ENCODE measurements at regions of chr2 and their contacts with region 1.

Region 1: DNA sequence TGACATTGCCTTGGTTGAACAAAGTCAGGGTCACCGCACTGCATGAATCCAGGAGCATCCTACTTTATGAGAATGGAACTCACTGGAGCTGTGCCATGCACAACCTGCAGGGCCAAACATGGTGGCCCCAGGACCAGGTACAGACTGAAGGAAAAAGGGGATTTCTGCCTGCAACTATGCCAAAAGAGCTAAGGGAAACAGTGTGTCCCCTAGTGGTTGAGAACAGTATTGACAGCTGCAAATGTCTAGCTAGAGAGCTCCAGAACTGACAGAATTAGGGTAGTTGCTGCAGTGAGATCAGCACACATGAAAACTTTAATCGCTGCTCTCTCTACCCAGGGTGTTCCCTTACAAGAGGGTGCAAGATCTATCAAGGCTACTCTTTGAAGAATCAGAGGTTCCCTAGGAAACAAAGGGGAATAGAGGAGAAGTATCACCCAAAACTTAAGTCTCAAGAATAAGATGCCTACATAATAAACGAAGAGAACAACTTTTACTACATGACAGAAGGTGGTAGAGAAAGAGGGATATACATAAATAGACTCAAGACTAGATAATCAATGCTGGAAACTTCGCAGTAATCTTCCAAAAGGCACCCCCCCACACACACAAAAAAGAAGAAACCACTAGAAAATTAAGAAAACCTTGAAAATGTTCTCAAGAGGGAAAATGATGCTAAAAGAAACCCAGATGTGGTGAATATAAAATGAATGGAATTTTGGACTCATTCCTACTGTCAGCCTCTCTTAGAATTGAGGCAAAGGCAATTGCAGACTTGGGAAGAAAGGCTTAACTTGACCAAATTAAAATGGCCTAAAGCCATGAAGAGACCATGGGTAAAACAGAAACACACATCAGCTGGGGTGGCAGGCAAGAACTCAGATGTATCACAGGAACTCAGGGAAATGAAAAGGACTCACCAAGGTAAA is 43.6 kb upstream of the IHH start:
- H3K4me3 ChIP-seq: no peak overlapping the region
- H3K27ac ChIP-seq: no peak overlapping the region
- H3K4me1 ChIP-seq: no peaks in the 10 kb centered on the region
- CTCF ChIP-seq: peak; percentile 31

Region 2: GRCh38 chr2:219041252-219041651 is 63.1 kb before region 1 on chr2 and contains the start of gene CFAP65:
- CTCF ChIA-PET with region 1: interaction called, 14 read pairs
- POLR2A ChIA-PET with region 1: no interaction called
- H3K4me3 ChIP-seq: peak within 1 kb of the TSS; percentile 50
- H3K27ac ChIP-seq: no peak within 1 kb of the TSS
- H3K4me1 ChIP-seq: no peaks in the 10 kb centered on the region
- CTCF ChIP-seq: no peak

Region 3: DNA sequence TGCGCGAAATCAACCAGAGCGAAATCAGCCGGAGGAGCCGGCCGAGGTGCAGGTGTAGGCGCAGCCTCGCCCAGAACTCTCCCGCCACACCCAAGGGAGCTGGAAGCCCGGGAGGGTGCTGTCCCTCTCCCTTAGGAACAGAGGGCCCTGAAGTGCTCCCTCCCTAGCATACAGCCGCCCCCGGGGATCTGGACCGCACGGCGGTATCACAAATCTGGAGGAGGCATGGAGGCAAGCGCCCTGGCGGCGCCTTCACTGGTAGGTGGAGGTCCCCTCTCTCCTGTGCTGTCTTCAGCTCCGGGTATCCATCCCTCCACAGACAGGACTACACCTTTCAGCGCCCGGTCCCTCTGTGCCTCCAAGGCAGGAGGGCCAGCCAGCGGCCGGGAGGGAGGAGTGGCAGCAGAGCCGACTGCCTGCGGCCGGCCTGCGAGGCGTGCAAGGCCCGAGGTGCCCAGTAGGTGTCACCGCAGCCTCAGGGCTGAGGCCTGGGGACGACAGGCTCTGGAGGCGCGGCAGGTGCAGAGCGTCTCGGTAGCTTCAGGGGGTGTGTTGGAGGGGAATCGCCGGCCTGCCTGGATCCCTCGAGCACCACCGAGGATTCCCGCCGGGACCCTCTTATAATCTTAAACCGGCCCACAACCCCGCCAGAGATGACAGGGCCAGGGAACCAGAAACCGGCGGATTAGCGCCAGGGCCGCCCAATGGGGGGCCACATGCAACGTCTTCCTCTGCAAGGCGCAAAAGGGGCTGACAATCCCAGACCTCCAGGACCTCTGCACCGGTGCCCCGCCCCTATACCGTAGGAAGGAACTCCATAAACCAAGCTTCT is 46.4 kb before region 1 on chr2:
- CTCF ChIA-PET with region 1: interaction called, 19 read pairs
- POLR2A ChIA-PET with region 1: interaction called, 3 read pairs
- H3K4me3 ChIP-seq: no peak overlapping the region
- H3K27ac ChIP-seq: no peak overlapping the region
- H3K4me1 ChIP-seq: no peaks in the 10 kb centered on the region; the same call in 1 of the 2 replicates
- CTCF ChIP-seq: peak; percentile 93

Measured in HEK293 (cell line).